ENCODE measurements at regions of chr3 and their contacts with region 1.

Region 1: GRCh38 chr3:16884084-16884747 is 539 bp upstream of the PLCL2 start:
- DNase-seq: peak; percentile 76 to 90 (median 80)
- ATAC-seq: peak; percentile 53 to 77 (median 74)
- H3K4me3 ChIP-seq: peak overlapping the region; percentile 78 to 93 (median 91)
- H3K27ac ChIP-seq: peak overlapping the region; percentile 91 to 99 (median 96)
- H3K4me1 ChIP-seq: peaks cover 0 to 59% (median 32%) of the 10 kb centered on the region in 12 donors
- H3K27me3 ChIP-seq: no peaks in the 10 kb centered on the region
- CTCF ChIP-seq: peak; percentile 53 to 80 (median 72)
- POLR2A ChIP-seq: peak in 1 of 2 donors; percentile 14

Region 2: DNA sequence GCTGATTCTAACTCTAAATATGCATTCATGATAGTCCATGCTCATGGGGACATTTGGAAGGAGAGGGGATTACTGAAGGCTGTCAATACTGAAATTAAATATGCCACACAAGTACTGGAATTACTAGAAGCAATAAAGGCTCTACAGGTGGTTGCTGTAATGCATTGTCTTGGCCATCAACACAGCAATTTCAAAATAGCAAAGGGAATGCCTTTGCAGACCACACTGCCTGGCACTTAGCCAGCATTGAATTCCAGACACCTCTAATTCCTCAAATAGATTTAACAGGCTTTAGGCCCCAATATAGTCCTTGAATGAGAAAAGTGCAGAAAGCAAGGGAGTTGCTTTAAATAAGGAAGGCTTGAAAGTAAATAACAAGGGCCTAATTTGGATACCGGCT is 115.3 kb before region 1 on chr3:
- intact Hi-C with region 1: loop called in 4 of 10 experiments (anchors 5 to 10 kb)
- DNase-seq: peak in 1 of 5 donors; percentile 39
- ATAC-seq: peak in 2 of 4 donors; percentile 10
- H3K4me3 ChIP-seq: no peak overlapping the region
- H3K27ac ChIP-seq: peak overlapping the region in 11 of 12 donors; percentile 11 to 90 (median 76)
- H3K4me1 ChIP-seq: peaks cover 0 to 38% (median 19%) of the 10 kb centered on the region in 12 donors
- H3K27me3 ChIP-seq: no peaks in the 10 kb centered on the region
- CTCF ChIP-seq: no peak
- POLR2A ChIP-seq: no peak

Region 3: GRCh38 chr3:16940769-16941700 is 56.8 kb after region 1 on chr3:
- intact Hi-C with region 1: loop called in 1 of 10 experiments (anchors 5 kb)
- DNase-seq: no peak
- ATAC-seq: peak in 3 of 4 donors; percentile 51 to 73 (median 60)
- H3K4me3 ChIP-seq: no peak overlapping the region
- H3K27ac ChIP-seq: peak overlapping the region in 9 of 12 donors; percentile 4 to 56 (median 33)
- H3K4me1 ChIP-seq: peaks cover 0 to 82% (median 43%) of the 10 kb centered on the region in 12 donors
- H3K27me3 ChIP-seq: no peaks in the 10 kb centered on the region
- CTCF ChIP-seq: no peak
- POLR2A ChIP-seq: no peak

Region 4: GRCh38 chr3:17032407-17033034 is 148.3 kb after region 1 on chr3:
- intact Hi-C with region 1: loop called (anchors 2 to 10 kb)
- DNase-seq: no peak
- ATAC-seq: peak; percentile 51 to 76 (median 66)
- H3K4me3 ChIP-seq: no peak overlapping the region
- H3K27ac ChIP-seq: no peak overlapping the region
- H3K4me1 ChIP-seq: peaks cover 0 to 40% (median 7%) of the 10 kb centered on the region in 12 donors
- H3K27me3 ChIP-seq: no peaks in the 10 kb centered on the region
- CTCF ChIP-seq: peak; percentile 46 to 74 (median 68)
- POLR2A ChIP-seq: no peak

Region 5: GRCh38 chr3:17140670-17141505 is 256.7 kb after region 1 on chr3:
- intact Hi-C with region 1: loop called in 4 of 10 experiments (anchors 1 to 10 kb)
- DNase-seq: peak in 4 of 5 donors; percentile 41 to 85 (median 68)
- ATAC-seq: peak; percentile 81 to 88 (median 86)
- H3K4me3 ChIP-seq: peak overlapping the region in 2 of 12 donors; percentile 3 to 19
- H3K27ac ChIP-seq: peak overlapping the region in 11 of 12 donors; percentile 32 to 78 (median 64)
- H3K4me1 ChIP-seq: peaks cover 0 to 26% (median 9%) of the 10 kb centered on the region in 12 donors
- H3K27me3 ChIP-seq: no peaks in the 10 kb centered on the region
- CTCF ChIP-seq: peak in 11 of 12 donors; percentile 12 to 45 (median 29)
- POLR2A ChIP-seq: no peak

Region 6: GRCh38 chr3:17233398-17233800 is 349.2 kb after region 1 on chr3:
- intact Hi-C with region 1: loop called in 6 of 10 experiments (anchors 2 to 10 kb)
- DNase-seq: no peak
- ATAC-seq: peak; percentile 72 to 84 (median 83)
- H3K4me3 ChIP-seq: no peak overlapping the region
- H3K27ac ChIP-seq: no peak overlapping the region
- H3K4me1 ChIP-seq: peaks cover 0 to 38% (median 11%) of the 10 kb centered on the region in 12 donors
- H3K27me3 ChIP-seq: no peaks in the 10 kb centered on the region
- CTCF ChIP-seq: peak; percentile 54 to 78 (median 72)
- POLR2A ChIP-seq: no peak